Common myeloid progenitor, CD34-positive (primary cell): ENCODE measurements at regions of chr11 and their contacts with region 1.

Region 1: DNA sequence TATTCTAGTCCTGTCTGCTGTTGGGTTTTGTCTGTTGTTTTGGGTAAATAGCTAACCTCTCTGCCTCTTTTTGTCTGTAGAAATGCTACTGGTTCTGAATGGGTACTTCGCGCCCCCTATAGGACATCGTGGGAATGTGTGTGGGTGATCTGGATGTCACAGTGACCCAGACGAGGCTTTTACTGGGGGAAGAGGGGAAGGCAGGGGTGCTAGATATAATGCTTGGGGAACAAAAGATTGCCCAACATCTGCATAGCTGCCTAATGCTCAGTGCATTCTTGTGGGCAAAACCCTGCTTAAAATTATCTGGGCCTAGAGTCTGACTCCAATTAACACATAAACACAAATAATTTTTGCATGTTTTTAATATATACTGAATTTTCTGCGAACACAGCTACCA is 57.7 kb downstream of the BMAL1 start:
- DNase-seq: peak; percentile 67 to 84 (median 80)
- H3K4me3 ChIP-seq: no peak overlapping the region
- H3K27ac ChIP-seq: no peak overlapping the region
- H3K4me1 ChIP-seq: peaks cover 0 to 32% (median 29%) of the 10 kb centered on the region in 4 experiments
- H3K27me3 ChIP-seq: no peaks in the 10 kb centered on the region

Region 2: DNA sequence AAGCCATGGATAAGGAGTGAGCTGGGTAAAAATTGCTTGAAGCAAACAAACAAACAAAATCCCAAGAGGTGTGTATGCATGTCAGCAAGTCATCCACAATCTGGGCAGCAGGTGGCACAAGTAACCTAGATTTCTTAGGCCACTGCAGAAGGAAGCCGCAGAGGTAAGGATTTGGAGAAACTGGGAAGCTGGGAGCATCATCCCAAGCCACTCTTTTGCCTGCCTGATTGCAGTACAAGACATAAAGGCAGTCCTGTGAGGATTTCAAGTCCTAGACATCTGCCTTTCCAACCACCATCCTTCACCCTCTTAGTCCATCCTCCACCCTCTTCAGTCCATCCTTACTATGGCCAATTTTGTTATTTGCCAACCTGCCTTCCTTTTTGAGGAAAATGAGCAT is 124.9 kb before region 1 on chr11:
- CTCF ChIA-PET with region 1: interaction called, 18 read pairs
- POLR2A ChIA-PET with region 1: interaction called, 3 read pairs
- DNase-seq: peak; percentile 34 to 66 (median 60)
- H3K4me3 ChIP-seq: no peak overlapping the region
- H3K27ac ChIP-seq: no peak overlapping the region
- H3K4me1 ChIP-seq: peaks cover 0 to 19% (median 13%) of the 10 kb centered on the region in 4 experiments
- H3K27me3 ChIP-seq: no peaks in the 10 kb centered on the region

Region 3: GRCh38 chr11:13222285-13222684 is 113.0 kb before region 1 on chr11:
- CTCF ChIA-PET with region 1: no interaction called
- POLR2A ChIA-PET with region 1: no interaction called
- DNase-seq: no peak
- H3K4me3 ChIP-seq: no peak overlapping the region
- H3K27ac ChIP-seq: no peak overlapping the region
- H3K4me1 ChIP-seq: no peaks in the 10 kb centered on the region
- H3K27me3 ChIP-seq: peaks cover 0 to 3% (median 0%) of the 10 kb centered on the region in 5 experiments

Region 4: GRCh38 chr11:13238879-13239514 is 96.3 kb before region 1 on chr11:
- CTCF ChIA-PET with region 1: interaction called, 12 read pairs
- POLR2A ChIA-PET with region 1: no interaction called
- DNase-seq: peak; percentile 60 to 78 (median 72)
- H3K4me3 ChIP-seq: no peak overlapping the region
- H3K27ac ChIP-seq: no peak overlapping the region
- H3K4me1 ChIP-seq: peaks cover 0 to 4% (median 1%) of the 10 kb centered on the region in 4 experiments
- H3K27me3 ChIP-seq: peaks cover 0 to 9% (median 3%) of the 10 kb centered on the region in 5 experiments

Region 5: DNA sequence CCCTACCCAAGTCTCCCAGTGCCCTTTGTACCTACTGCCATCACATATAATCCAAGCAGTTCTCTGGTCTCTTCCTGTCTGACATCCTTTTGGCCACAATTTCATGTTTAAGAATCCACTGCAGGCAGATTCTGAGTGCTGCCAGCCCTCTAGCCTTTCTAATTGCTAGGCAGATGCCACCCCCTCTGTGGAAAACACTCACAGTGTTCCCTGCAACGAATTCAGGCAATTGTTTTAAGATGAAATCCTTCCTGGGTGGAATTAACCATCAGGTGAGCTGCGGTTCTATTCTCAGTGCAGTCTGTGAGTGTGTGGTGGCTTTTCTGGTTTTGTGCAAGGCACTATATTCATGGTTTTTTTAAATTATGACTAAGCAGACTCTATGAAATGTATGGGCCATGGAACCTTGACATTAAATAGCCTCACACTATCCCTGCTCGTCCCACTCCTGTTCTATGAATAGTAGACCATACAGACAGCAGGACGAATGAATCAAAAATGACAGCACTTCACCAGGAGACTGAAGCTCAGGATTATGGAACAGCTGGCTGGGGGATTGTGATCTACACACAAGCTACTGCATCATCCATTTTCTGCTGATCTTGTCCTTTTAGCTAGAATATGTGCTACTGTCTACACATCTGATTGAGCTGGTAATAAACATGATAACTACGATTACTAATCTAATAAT is 87.6 kb before region 1 on chr11:
- CTCF ChIA-PET with region 1: interaction called, 11 read pairs
- POLR2A ChIA-PET with region 1: no interaction called
- DNase-seq: no peak
- H3K4me3 ChIP-seq: no peak overlapping the region
- H3K27ac ChIP-seq: no peak overlapping the region
- H3K4me1 ChIP-seq: no peaks in the 10 kb centered on the region
- H3K27me3 ChIP-seq: peaks cover 2 to 16% (median 8%) of the 10 kb centered on the region in 5 experiments